A549 (cell line): ENCODE measurements at regions of chr19 and their contacts with region 1.

Region 1: GRCh38 chr19:55289117-55289796 is 5.5 kb downstream of the BRSK1 start:
- DNase-seq: peak in 1 of 2 experiments; percentile 51
- ATAC-seq: peak; percentile 15 to 49; a peak in 4 of 6 replicates
- H3K4me3 ChIP-seq: no peak overlapping the region
- H3K27ac ChIP-seq: no peak overlapping the region
- H3K4me1 ChIP-seq: peaks cover 13% of the 10 kb centered on the region; the same call in 1 of the 3 replicates
- CTCF ChIP-seq: no peak
- EP300 ChIP-seq: no peak
- POLR2A ChIP-seq: no peak
- RAD21 ChIP-seq: no peak

Region 2: GRCh38 chr19:55258828-55259539 is 30.3 kb before region 1 on chr19 and contains the start of gene PPP6R1:
- CTCF ChIA-PET with region 1: interaction called, 12 read pairs
- POLR2A ChIA-PET with region 1: no interaction called
- DNase-seq: peak; percentile 99 to 100
- ATAC-seq: peak; percentile 83 to 93
- H3K4me3 ChIP-seq: peak within 1 kb of the TSS; percentile 81
- H3K27ac ChIP-seq: peak within 1 kb of the TSS; percentile 87 to 95
- H3K4me1 ChIP-seq: peaks cover 36% of the 10 kb centered on the region
- CTCF ChIP-seq: no peak
- EP300 ChIP-seq: peak in 1 of 2 experiments; percentile 31; a peak in 1 of 5 replicates
- POLR2A ChIP-seq: peak; percentile 87
- RAD21 ChIP-seq: peak; percentile 44 to 61; a peak in 4 of 5 replicates
- polyA plus RNA-seq, gene PPP6R1: 42.9 and 44.6 TPM in 2 replicates

Region 3: GRCh38 chr19:55319785-55320184 is 30.5 kb after region 1 on chr19:
- CTCF ChIA-PET with region 1: interaction called, 31 read pairs
- POLR2A ChIA-PET with region 1: no interaction called
- DNase-seq: no peak
- ATAC-seq: peak; percentile 54 to 82; a peak in 4 of 6 replicates
- H3K4me3 ChIP-seq: no peak overlapping the region
- H3K27ac ChIP-seq: 0 out of 6 replicates have a peak overlapping the region, but pooled peaks of 1 of the 2 experiments have one; percentile 14
- H3K4me1 ChIP-seq: peaks cover 19% of the 10 kb centered on the region
- CTCF ChIP-seq: no peak
- EP300 ChIP-seq: no peak
- POLR2A ChIP-seq: no peak
- RAD21 ChIP-seq: no peak

Region 4: GRCh38 chr19:55362990-55363716 is 73.9 kb after region 1 on chr19 and contains the start of gene GARIN5B:
- CTCF ChIA-PET with region 1: interaction called, 18 read pairs
- POLR2A ChIA-PET with region 1: no interaction called
- DNase-seq: no peak
- ATAC-seq: peak; percentile 27 to 60
- H3K4me3 ChIP-seq: no peak within 1 kb of the TSS
- H3K27ac ChIP-seq: peak within 1 kb of the TSS in 1 of 2 experiments; percentile 47; a peak in 3 of 6 replicates
- H3K4me1 ChIP-seq: peaks cover 34% of the 10 kb centered on the region
- CTCF ChIP-seq: no peak
- EP300 ChIP-seq: no peak
- POLR2A ChIP-seq: no peak
- RAD21 ChIP-seq: no peak; a peak in 1 of 5 replicates
- polyA plus RNA-seq, gene GARIN5B: not detected in 2 replicates

Region 5: GRCh38 chr19:55391702-55392615 is 102.7 kb after region 1 on chr19:
- CTCF ChIA-PET with region 1: interaction called, 16 read pairs
- POLR2A ChIA-PET with region 1: no interaction called
- DNase-seq: no peak
- ATAC-seq: peak; percentile 6 to 27; a peak in 3 of 6 replicates
- H3K4me3 ChIP-seq: no peak overlapping the region
- H3K27ac ChIP-seq: peak overlapping the region in 1 of 2 experiments; percentile 19; a peak in 3 of 6 replicates
- H3K4me1 ChIP-seq: peaks cover 61% of the 10 kb centered on the region
- CTCF ChIP-seq: no peak
- EP300 ChIP-seq: no peak
- POLR2A ChIP-seq: no peak
- RAD21 ChIP-seq: no peak